ENCODE measurements at regions of chr4 and their contacts with region 1.

Region 1: GRCh38 chr4:3442959-3443749 is 1.4 kb downstream of the HGFAC start:
- DNase-seq: no peak

Region 2: GRCh38 chr4:3193531-3194203 is 249.5 kb before region 1 on chr4:
- intact Hi-C with region 1: loop called (anchors 5 kb)
- DNase-seq: no peak

Region 3: DNA sequence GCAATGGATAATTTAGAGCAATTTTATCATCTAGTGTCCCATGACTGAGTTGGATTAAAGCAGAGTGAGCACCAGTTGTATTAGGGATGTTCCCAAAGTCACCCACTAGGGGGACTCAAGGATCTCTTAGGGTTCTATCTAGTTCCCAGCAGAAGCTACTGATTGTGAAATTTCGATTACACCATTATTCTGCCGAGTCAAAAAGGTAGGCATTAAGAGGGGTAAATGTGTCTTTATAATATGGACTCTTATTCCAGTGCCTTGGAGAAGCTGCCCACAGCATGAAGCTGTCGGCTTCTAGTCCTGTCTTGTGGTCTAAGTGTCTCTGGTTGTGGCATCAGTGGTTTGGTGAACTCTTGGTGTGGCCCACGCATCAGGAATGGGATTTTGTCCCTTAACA is 97.0 kb before region 1 on chr4:
- intact Hi-C with region 1: loop called (anchors 1 kb)
- DNase-seq: no peak

Region 4: GRCh38 chr4:3369781-3370674 is 73.1 kb before region 1 on chr4:
- intact Hi-C with region 1: no loop called
- DNase-seq: no peak

Measured in cardiac septum (tissue), 1 donor.